AG04450 (cell line): ENCODE measurements at regions of chr17 and their contacts with region 1.

Region 1: GRCh38 chr17:4806777-4807604 is at the start of gene PLD2:
- DNase-seq: no peak
- H3K4me3 ChIP-seq: peak within 1 kb of the TSS; percentile 74
- H3K27ac ChIP-seq: no peak within 1 kb of the TSS
- H3K27me3 ChIP-seq: no peaks in the 10 kb centered on the region
- CTCF ChIP-seq: no peak
- polyA plus RNA-seq, gene PLD2: 18.9 and 22.2 TPM in 2 replicates

Region 2: DNA sequence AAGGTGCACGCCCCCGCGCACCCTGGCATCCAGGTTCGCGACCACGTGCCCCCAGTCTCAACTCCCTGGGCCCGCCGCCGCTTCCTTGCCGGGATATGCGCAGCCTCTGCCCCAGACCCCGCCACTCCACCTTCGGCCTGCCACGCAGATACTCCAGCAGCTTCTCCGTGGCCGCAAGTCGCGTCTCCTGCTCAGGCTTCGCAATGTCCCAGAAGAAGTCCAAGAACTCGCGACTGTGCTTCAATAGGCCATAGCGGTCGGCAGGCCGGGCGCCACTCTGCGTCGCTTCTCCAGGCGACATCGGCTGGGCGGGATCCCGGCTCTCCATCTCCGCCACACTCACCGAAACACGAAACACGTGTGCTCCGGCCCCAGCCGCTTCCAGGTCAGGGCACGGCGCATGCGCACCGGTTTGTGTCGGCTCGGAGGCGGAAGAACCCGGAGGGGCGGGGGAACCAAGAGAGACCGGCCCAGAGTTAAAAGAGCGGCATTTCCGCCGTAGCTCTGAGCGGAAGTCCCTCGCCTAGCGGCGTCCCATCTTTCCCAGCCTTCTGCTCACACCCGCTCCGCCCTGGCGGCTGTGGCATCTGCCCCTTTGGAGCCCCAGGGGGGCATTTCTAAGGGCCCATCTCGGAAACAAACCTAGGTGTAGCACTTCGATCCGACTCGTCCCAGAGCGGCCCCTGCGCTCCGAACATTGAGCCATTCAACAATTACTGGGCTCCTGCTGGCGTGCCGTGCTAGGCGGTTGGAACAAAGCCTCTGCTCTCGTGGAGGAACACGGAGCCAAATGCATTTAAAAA is 251.8 kb before region 1 on chr17 and contains the start of gene MYBBP1A:
- CTCF ChIA-PET with region 1: no interaction called
- POLR2A ChIA-PET with region 1: no interaction called
- DNase-seq: peak; percentile 85
- H3K4me3 ChIP-seq: peak within 1 kb of the TSS; percentile 97
- H3K27ac ChIP-seq: peak within 1 kb of the TSS; percentile 78
- H3K27me3 ChIP-seq: no peaks in the 10 kb centered on the region
- CTCF ChIP-seq: peak; percentile 31; the same call in 1 of the 2 replicates
- polyA plus RNA-seq, gene MYBBP1A: 12.5 and 14.7 TPM in 2 replicates

Region 3: GRCh38 chr17:4565209-4566141 is 241.5 kb before region 1 on chr17:
- CTCF ChIA-PET with region 1: no interaction called
- POLR2A ChIA-PET with region 1: no interaction called
- DNase-seq: peak; percentile 38
- H3K4me3 ChIP-seq: no peak overlapping the region
- H3K27ac ChIP-seq: no peak overlapping the region
- H3K27me3 ChIP-seq: peaks cover 17% of the 10 kb centered on the region
- CTCF ChIP-seq: peak; percentile 93

Region 4: GRCh38 chr17:4583782-4584100 is 223.2 kb before region 1 on chr17:
- CTCF ChIA-PET with region 1: no interaction called
- POLR2A ChIA-PET with region 1: no interaction called
- DNase-seq: no peak
- H3K4me3 ChIP-seq: no peak overlapping the region
- H3K27ac ChIP-seq: no peak overlapping the region
- H3K27me3 ChIP-seq: peaks cover 67% of the 10 kb centered on the region
- CTCF ChIP-seq: peak; percentile 45

Region 5: GRCh38 chr17:4796553-4796921 is 10.5 kb before region 1 on chr17:
- CTCF ChIA-PET with region 1: no interaction called
- POLR2A ChIA-PET with region 1: interaction called, 18 read pairs
- DNase-seq: no peak
- H3K4me3 ChIP-seq: peak overlapping the region; percentile 100
- H3K27ac ChIP-seq: peak overlapping the region; percentile 31
- H3K27me3 ChIP-seq: no peaks in the 10 kb centered on the region
- CTCF ChIP-seq: no peak